Common myeloid progenitor, CD34-positive (primary cell): ENCODE measurements at regions of chr22 and their contacts with region 1.

Region 1: DNA sequence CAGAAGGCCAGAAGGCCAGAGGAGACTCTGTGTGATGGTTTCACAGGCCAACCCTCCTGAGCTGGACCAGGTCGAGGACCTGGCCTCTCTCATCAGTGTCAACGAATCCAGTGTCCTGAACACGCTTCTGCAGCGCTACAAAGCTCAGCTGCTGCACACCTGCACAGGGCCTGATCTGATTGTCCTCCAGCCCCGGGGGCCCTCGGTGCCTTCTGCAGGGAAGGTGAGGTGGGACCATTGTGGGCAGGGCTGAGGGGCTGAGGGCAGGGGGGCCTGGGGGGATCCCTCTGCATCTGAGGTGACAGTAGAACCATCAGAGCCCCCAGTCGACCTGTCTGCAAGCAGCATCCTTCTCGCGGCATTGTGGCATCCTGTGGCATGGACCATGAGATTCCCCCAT is 30.3 kb downstream of the MYO18B start:
- DNase-seq: no peak
- H3K4me3 ChIP-seq: no peak overlapping the region
- H3K27ac ChIP-seq: no peak overlapping the region
- H3K4me1 ChIP-seq: no peaks in the 10 kb centered on the region
- H3K27me3 ChIP-seq: peaks cover 0 to 3% (median 0%) of the 10 kb centered on the region in 5 experiments

Region 2: DNA sequence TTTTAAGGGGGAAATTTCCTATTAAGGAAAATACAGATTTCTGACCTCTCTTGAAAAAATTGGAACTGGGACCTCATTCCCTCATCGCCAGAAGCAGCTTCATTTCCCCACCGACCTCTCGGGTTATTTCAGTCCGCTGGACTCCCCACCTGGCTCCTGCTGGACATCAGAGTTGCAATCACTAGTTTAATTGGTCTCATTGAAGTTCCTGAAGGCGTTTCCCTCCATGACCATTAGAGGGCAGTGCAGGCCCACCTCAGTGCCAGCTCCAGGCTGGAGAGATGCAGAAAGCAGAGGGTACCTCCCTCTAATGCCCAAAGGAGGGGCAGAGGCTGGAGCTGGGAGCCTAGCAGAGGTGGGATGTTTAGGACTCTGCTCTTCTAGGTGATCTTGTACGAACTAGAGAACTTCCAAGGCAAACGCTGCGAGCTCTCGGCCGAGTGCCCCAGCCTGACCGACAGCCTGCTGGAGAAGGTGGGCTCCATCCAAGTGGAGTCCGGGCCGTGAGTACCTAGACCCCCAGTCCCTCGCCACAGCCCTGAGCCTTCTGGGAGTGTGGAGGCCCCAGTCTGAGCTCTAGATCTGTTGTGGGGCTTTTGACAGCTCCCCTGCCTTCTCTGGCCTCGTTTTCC is 569.9 kb before region 1 on chr22:
- CTCF ChIA-PET with region 1: interaction called, 17 read pairs
- POLR2A ChIA-PET with region 1: no interaction called
- DNase-seq: peak; percentile 47 to 65 (median 53)
- H3K4me3 ChIP-seq: no peak overlapping the region
- H3K27ac ChIP-seq: no peak overlapping the region
- H3K4me1 ChIP-seq: no peaks in the 10 kb centered on the region
- H3K27me3 ChIP-seq: no peaks in the 10 kb centered on the region

Region 3: GRCh38 chr22:26339755-26340154 is 567.5 kb after region 1 on chr22:
- CTCF ChIA-PET with region 1: no interaction called
- POLR2A ChIA-PET with region 1: no interaction called
- DNase-seq: no peak
- H3K4me3 ChIP-seq: no peak overlapping the region
- H3K27ac ChIP-seq: no peak overlapping the region
- H3K4me1 ChIP-seq: no peaks in the 10 kb centered on the region
- H3K27me3 ChIP-seq: peaks cover 0 to 21% (median 5%) of the 10 kb centered on the region in 5 experiments